Psoas muscle (tissue), 8 donors: ENCODE measurements at regions of chr6 and their contacts with region 1.

Region 1: GRCh38 chr6:126804332-126805064 is 314.0 kb upstream of the RSPO3 start:
- DNase-seq: no peak
- ATAC-seq: peak; percentile 48 to 91 (median 61)
- H3K4me3 ChIP-seq: no peak overlapping the region
- H3K27ac ChIP-seq: no peak overlapping the region
- H3K4me1 ChIP-seq: no peaks in the 10 kb centered on the region
- H3K27me3 ChIP-seq: no peaks in the 10 kb centered on the region
- CTCF ChIP-seq: peak; percentile 68

Region 2: DNA sequence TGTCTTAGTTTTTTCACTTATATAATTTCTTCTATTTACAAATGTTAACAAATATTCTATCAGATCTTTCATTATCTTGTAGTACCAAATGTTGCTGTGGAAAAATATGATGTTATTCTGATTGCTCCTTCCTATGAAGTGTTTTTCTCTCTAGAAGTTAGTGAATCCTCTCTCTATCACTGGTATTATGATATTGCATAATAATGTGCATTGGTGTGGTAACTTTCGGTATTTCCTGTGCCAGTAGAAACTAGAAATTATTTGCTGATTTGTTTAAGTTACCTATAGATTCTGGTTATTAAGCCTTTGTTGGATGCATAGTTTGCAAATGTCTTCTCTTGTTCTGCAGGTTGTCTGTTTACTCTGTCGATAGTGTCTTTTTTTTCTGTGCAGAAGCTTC is 122.1 kb before region 1 on chr6:
- intact Hi-C with region 1: no loop called
- DNase-seq: no peak
- ATAC-seq: no peak
- H3K4me3 ChIP-seq: no peak overlapping the region
- H3K27ac ChIP-seq: no peak overlapping the region
- H3K4me1 ChIP-seq: peaks cover 11% of the 10 kb centered on the region
- H3K27me3 ChIP-seq: no peaks in the 10 kb centered on the region
- CTCF ChIP-seq: no peak

Region 3: DNA sequence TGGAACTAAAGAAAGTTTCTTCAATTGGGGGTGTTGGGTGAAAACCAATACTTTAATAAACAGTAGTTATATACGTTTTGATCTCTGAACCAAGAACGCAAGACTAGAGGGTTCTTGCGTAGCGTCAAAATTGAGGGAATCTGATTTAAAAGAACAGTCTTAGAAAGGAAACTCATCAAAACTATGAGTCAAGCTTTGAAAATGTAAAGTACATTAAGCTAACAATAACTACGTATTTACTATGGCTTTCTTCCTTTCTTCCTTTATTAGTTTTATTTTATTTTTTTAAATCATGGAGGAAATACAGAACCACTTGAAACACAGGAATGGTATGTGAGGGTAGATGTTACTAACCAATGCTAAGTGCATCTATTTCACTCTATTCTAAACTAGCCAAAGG is 27.0 kb after region 1 on chr6:
- intact Hi-C with region 1: no loop called
- DNase-seq: no peak
- ATAC-seq: no peak
- H3K4me3 ChIP-seq: no peak overlapping the region
- H3K27ac ChIP-seq: no peak overlapping the region
- H3K4me1 ChIP-seq: no peaks in the 10 kb centered on the region
- H3K27me3 ChIP-seq: no peaks in the 10 kb centered on the region
- CTCF ChIP-seq: no peak

Region 4: GRCh38 chr6:126873351-126873750 is 68.9 kb after region 1 on chr6:
- intact Hi-C with region 1: no loop called
- DNase-seq: no peak
- ATAC-seq: no peak
- H3K4me3 ChIP-seq: no peak overlapping the region
- H3K27ac ChIP-seq: no peak overlapping the region
- H3K4me1 ChIP-seq: no peaks in the 10 kb centered on the region
- H3K27me3 ChIP-seq: no peaks in the 10 kb centered on the region
- CTCF ChIP-seq: no peak

Region 5: DNA sequence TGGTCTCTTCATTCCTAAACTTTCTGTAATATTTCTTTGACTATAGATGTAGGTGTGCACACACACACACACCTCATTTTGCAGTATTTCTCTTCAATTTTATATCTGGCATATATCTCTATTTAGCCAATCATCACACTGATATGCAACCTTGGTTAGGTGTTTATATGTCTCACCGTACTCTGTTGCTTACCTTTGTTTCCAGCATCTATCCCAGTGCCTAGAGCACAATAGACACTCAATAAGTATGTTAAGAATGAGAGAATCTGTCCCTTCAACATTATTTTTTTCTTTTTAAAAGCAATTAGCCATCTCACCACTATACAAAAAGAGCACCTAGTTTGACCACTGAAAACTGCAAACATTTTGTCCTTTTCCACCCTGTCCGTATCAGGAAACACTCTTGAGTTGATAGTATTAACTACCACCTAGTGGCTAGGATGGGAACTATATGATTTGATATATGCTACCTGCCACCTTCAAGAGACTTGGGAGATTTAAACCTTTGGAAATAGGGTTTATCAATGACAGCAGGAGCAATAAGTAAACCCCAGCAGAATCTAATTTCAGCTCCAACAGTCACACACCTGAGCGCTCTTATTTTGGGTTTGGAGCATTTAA is 265.3 kb after region 1 on chr6:
- intact Hi-C with region 1: loop called in 1 of 2 experiments (anchors 10 kb)
- DNase-seq: no peak
- ATAC-seq: peak; percentile 49 to 77 (median 55)
- H3K4me3 ChIP-seq: no peak overlapping the region
- H3K27ac ChIP-seq: no peak overlapping the region
- H3K4me1 ChIP-seq: peaks cover 4% of the 10 kb centered on the region
- H3K27me3 ChIP-seq: no peaks in the 10 kb centered on the region
- CTCF ChIP-seq: peak; percentile 50

Region 6: GRCh38 chr6:127182501-127182900 is 378.0 kb after region 1 on chr6:
- intact Hi-C with region 1: loop called in 1 of 2 experiments (anchors 5 kb)
- DNase-seq: no peak
- ATAC-seq: no peak
- H3K4me3 ChIP-seq: no peak overlapping the region
- H3K27ac ChIP-seq: no peak overlapping the region
- H3K4me1 ChIP-seq: peaks cover 4% of the 10 kb centered on the region
- H3K27me3 ChIP-seq: no peaks in the 10 kb centered on the region
- CTCF ChIP-seq: no peak